WTC11 (cell line): ENCODE measurements at regions of chr9 and their contacts with region 1.

Region 1: DNA sequence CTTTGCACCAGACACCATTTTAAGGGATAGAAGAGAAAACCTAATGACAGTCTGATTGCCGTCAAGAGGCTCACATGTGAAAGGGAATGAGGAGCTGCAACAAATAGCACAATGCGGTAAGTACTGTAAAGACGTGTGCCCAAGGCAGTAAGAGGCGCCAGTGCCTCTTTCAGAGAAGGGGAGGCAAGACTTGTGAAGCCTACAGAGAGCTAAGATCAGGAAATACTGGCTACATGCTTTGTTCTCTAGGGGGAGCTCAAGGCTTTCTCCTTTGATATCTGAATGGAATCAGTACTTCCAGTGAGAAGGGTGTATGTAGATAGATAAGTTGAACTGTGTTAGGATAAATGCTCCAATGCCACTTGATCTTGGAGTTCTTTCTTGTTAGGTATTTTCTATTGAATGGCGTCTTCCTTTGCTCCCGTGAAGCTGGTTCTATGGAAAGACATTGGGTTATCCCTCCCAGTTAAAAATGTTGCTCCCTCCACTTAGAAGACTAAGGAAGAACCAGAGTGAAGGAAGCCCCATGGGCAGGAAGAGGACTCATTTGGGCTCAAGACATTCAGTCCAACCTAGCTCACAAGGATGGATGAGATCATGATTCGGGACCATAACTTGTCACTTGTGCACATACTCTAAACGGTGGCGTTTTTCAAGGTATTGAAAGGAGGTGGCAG is 23.5 kb upstream of the ALDOB start:
- DNase-seq: peak; percentile 34
- ATAC-seq: peak; percentile 95
- H3K4me3 Mint-ChIP-seq: no peak overlapping the region
- H3K27ac Mint-ChIP-seq: no peak overlapping the region
- H3K4me1 Mint-ChIP-seq: peaks cover 55% of the 10 kb centered on the region
- H3K27me3 Mint-ChIP-seq: no peaks in the 10 kb centered on the region
- CTCF ChIP-seq: peak; percentile 33; the same call in 1 of the 2 replicates

Region 2: DNA sequence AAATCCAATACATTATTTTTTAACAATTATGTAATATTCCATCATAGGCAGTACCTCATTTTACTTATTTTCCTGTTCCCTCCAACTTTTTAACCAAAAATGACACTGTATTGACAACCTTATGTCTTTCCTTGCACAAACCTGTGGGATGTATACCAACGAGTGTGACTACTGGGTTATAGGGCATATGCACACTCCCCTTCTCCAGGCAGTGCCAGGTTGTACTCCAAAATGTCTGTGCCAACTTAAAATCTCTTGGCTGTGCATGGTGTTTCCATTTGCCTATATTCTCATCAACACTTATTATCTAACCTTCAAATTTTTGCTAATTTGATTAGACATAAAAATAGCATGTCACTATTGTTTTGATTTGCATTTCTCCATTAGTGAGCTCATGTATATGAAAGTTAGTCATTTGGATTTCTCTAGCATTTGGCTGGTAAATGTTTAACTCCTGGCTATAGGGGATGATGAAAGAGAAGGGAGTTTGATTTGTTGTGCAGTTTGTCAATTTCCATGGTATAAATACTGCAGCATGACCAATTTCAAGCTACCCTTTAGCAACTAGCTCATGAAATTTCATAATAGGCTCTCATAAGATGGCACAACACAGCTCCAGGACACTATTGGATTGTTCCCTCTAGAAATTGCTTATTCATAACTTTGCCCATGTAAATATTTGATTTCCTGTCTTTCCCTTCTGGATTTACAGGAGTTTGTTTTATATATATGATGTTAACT is 204.2 kb before region 1 on chr9:
- CTCF ChIA-PET with region 1: no interaction called
- POLR2A ChIA-PET with region 1: no interaction called
- DNase-seq: no peak
- ATAC-seq: no peak
- H3K4me3 Mint-ChIP-seq: no peak overlapping the region
- H3K27ac Mint-ChIP-seq: no peak overlapping the region
- H3K4me1 Mint-ChIP-seq: peaks cover 17% of the 10 kb centered on the region
- H3K27me3 Mint-ChIP-seq: no peaks in the 10 kb centered on the region
- CTCF ChIP-seq: no peak

Region 3: DNA sequence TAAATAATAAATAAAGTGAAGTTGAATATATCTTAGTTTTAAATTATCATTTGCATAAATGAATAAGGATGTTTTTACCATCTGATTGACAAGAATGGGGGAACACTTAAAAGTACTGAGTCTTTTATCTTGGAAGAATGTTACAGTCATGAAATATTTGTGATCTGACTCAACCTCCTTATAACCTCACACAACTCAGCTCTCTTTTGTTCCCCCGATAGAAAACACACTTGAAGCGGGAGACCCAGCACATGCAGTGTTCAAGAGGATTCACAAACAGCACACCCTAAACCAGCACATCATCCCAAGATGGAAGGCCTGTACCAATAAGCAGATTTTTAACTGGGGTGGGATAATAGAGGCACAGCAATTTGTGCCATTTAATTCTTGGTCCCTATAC is 89.8 kb before region 1 on chr9:
- CTCF ChIA-PET with region 1: no interaction called
- POLR2A ChIA-PET with region 1: no interaction called
- DNase-seq: no peak
- ATAC-seq: no peak
- H3K4me3 Mint-ChIP-seq: no peak overlapping the region
- H3K27ac Mint-ChIP-seq: no peak overlapping the region
- H3K4me1 Mint-ChIP-seq: peaks cover 6% of the 10 kb centered on the region
- H3K27me3 Mint-ChIP-seq: no peaks in the 10 kb centered on the region
- CTCF ChIP-seq: no peak

Region 4: DNA sequence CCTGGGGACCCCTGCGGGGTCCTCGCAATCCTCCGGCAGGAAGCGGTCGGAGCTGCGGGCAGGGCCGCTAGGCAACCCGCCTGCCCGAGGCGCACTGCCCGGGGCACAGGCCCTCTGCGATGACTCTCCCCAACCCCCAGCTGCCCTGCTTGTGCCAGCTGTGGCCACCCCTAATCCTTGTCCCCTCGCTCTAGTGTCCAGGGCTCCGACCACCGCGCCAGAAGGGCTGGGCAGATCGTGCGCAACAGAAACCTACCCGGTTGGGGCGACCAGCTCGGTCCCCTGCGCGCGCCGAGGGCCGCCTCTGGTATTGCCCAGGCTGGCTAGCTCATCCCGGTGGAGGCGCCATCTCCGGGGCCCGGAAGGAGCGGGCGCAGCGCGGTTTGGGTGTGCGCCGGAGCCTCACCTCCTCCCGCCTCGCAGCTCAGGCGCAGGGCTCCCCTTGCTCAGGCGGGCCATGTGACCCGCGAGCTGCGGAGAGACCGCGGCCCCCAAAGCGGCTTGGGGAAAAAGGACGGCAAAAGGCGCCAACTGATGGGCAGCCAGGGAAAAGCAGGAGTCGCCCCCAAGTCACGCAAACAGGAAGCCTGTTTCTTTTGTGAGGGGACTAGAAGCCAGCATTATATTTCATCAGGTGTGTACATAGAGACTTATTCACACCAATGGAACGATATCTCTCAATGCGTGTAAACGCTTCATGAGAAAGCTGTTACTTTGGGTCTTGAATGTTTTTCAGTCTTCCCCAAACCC is 27.8 kb after region 1 on chr9:
- CTCF ChIA-PET with region 1: interaction called, 32 read pairs
- POLR2A ChIA-PET with region 1: interaction called, 5 read pairs
- DNase-seq: peak; percentile 82
- ATAC-seq: peak; percentile 92
- H3K4me3 Mint-ChIP-seq: peak overlapping the region; percentile 90
- H3K27ac Mint-ChIP-seq: peak overlapping the region; percentile 89
- H3K4me1 Mint-ChIP-seq: peaks cover 22% of the 10 kb centered on the region
- H3K27me3 Mint-ChIP-seq: peaks cover 6% of the 10 kb centered on the region
- CTCF ChIP-seq: no peak

Region 5: GRCh38 chr9:101524371-101524770 is 65.3 kb after region 1 on chr9:
- CTCF ChIA-PET with region 1: interaction called, 130 read pairs
- POLR2A ChIA-PET with region 1: interaction called, 6 read pairs
- DNase-seq: no peak
- ATAC-seq: peak; percentile 57
- H3K4me3 Mint-ChIP-seq: no peak overlapping the region
- H3K27ac Mint-ChIP-seq: no peak overlapping the region
- H3K4me1 Mint-ChIP-seq: peaks cover 18% of the 10 kb centered on the region
- H3K27me3 Mint-ChIP-seq: peaks cover 4% of the 10 kb centered on the region
- CTCF ChIP-seq: no peak

Region 6: GRCh38 chr9:101530077-101530711 is 71.1 kb after region 1 on chr9:
- CTCF ChIA-PET with region 1: interaction called, 130 read pairs
- POLR2A ChIA-PET with region 1: interaction called, 6 read pairs
- DNase-seq: peak; percentile 73
- ATAC-seq: peak; percentile 43
- H3K4me3 Mint-ChIP-seq: no peak overlapping the region
- H3K27ac Mint-ChIP-seq: no peak overlapping the region
- H3K4me1 Mint-ChIP-seq: peaks cover 12% of the 10 kb centered on the region
- H3K27me3 Mint-ChIP-seq: no peaks in the 10 kb centered on the region
- CTCF ChIP-seq: peak; percentile 61

Region 7: DNA sequence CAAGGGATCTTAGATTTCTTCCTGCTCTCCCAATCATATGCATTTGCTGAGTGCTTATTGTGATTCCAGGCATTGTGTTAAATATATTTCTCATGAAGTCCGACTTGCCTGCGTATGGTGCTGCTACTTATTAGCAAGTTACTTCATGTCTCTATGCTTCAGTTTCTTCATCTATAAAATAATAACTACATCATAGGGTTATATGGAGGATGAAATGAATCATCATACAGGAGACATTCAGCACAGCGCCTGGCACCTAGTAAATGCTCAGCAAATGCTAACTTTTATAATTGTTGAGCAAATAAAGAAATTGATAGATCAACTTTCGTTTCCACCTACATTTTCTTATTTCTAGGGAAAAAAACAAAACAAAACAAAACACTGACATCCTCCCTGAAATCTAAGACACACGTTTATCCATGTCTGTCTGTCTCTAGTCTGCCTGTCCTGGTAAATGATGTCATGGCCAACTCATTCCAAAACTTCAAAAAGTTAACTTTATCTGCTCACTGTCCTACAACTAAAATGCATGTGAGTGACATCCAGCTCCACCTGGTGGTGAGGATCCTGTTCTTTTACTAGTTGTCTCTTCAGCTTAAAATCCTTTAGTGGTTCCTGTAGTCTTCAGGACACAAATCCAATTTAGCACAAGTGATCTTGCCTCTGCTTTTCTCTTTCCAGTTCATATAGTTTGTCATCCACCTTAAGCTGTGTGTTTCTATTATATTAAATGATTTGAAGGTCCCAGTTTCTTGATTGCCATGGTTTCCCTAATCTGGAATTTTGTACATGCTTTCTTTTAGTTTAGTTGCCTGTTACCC is 108.0 kb after region 1 on chr9:
- CTCF ChIA-PET with region 1: interaction called, 15 read pairs
- POLR2A ChIA-PET with region 1: no interaction called
- DNase-seq: peak; percentile 31
- ATAC-seq: peak; percentile 56; the same call in 1 of the 2 replicates
- H3K4me3 Mint-ChIP-seq: no peak overlapping the region
- H3K27ac Mint-ChIP-seq: no peak overlapping the region
- H3K4me1 Mint-ChIP-seq: peaks cover 22% of the 10 kb centered on the region
- H3K27me3 Mint-ChIP-seq: no peaks in the 10 kb centered on the region
- CTCF ChIP-seq: no peak; the same call in 1 of the 2 replicates

Region 8: DNA sequence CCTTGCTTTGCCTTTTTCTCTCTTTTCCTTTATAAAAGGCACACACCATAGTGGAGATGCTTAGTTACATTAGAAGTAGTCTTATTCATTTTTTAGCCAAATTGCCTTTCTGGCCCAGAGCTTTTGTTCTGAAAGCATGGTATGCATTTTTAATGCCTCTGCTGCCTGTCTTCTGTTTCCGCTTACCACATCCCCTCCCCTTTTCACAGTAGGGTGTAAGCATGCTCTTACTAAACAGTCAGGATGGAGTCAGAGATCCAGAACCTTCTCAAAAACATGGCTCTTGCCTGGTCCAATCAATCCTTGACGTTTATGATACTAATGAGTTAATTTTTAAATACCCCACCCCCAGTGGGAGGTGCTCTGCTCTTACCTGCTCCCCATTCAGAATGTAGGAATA is 113.2 kb after region 1 on chr9:
- CTCF ChIA-PET with region 1: interaction called, 15 read pairs
- POLR2A ChIA-PET with region 1: no interaction called
- DNase-seq: no peak
- ATAC-seq: peak; percentile 67
- H3K4me3 Mint-ChIP-seq: no peak overlapping the region
- H3K27ac Mint-ChIP-seq: peak overlapping the region; percentile 43
- H3K4me1 Mint-ChIP-seq: peaks cover 36% of the 10 kb centered on the region
- H3K27me3 Mint-ChIP-seq: no peaks in the 10 kb centered on the region
- CTCF ChIP-seq: no peak